ENCODE measurements at regions of chr12 and their contacts with region 1.

Region 1: DNA sequence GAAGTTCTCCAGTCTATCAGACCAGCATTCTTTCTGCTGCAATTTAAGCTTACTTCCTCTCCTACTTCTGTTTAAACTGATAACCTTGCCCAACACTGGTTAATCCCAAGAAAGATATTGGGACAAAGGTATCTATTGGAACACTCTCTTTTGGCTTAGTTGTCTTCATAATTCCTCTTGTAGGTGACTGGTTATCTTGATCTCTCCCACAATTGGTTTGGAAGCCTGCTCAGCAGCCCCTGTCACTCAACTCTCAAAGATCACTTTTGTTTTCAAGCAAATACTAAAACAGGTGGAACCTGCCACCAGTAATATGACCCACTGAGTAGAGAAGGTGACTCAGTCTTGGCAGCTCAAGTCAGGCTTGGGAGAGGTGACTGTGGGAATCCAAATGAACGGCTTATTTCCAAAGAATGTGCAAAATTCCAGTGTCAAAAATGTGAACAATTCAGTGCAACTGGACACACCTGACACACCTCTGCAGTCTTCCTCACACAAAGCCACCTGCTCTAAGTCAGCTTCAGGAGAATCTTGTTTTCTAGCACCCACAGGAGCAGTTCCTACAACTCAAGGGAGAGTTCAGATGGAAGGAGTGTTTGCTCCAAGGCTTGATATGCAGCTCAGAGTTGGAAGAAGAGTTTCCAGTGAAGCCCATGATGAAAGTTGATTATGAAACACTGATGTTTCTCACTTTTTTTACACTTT is 83.2 kb upstream of the SLC38A2 start:
- DNase-seq: peak; percentile 84 to 87
- H3K4me3 ChIP-seq: no peak overlapping the region
- H3K4me3 Mint-ChIP-seq: peak overlapping the region; percentile 32
- H3K27ac Mint-ChIP-seq: peak overlapping the region; percentile 65
- H3K4me1 ChIP-seq: peaks cover 58% of the 10 kb centered on the region
- H3K4me1 Mint-ChIP-seq: peaks cover 46% of the 10 kb centered on the region
- H3K27me3 ChIP-seq: no peaks in the 10 kb centered on the region
- H3K27me3 Mint-ChIP-seq: no peaks in the 10 kb centered on the region
- CTCF ChIP-seq: no peak

Region 2: DNA sequence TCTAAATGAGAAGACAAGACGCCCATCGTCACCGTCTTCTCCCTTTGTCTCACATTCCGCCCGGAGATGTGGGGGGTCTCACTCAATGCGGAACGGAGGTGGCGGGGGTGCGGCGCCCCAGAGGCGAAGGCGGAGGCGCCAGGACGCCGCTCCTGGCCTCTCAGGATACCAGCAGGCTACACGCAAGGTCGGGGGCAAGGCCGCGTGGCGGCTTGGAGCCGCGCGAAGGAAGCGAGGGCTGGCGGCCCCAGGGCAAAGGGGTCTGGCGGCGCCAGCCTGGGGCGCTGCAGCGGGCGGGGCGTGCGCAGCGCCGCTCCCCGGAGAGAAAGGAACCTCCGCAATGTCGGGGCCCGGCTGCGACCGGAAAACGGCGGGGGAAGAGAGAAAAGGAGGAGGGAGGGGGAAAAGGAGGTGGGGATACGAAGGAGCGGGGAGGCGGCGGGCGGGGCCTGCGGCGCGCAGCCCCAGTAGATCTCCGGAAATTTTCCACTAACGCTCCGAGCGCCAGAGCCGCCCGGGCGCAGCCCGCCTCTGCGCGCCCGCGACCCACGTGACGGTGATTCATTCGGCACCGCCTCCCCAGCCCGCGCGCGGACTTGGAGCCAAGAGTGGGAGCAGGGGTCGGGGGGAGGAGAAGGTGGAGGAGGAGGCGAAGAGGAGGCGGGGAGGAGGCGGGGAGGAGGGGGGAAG is 72.7 kb before region 1 on chr12:
- CTCF ChIA-PET with region 1: no interaction called
- POLR2A ChIA-PET with region 1: no interaction called
- intact Hi-C with region 1: loop called (anchors 2 kb)
- DNase-seq: peak; percentile 97 to 98
- H3K4me3 ChIP-seq: peak overlapping the region; percentile 94
- H3K4me3 Mint-ChIP-seq: peak overlapping the region; percentile 77
- H3K27ac Mint-ChIP-seq: peak overlapping the region; percentile 99
- H3K4me1 ChIP-seq: peaks cover 47% of the 10 kb centered on the region
- H3K4me1 Mint-ChIP-seq: peaks cover 38% of the 10 kb centered on the region
- H3K27me3 ChIP-seq: no peaks in the 10 kb centered on the region
- H3K27me3 Mint-ChIP-seq: no peaks in the 10 kb centered on the region
- CTCF ChIP-seq: peak in 1 of 2 experiments; percentile 17

Region 3: GRCh38 chr12:46430340-46430948 is 25.4 kb before region 1 on chr12:
- CTCF ChIA-PET with region 1: no interaction called
- POLR2A ChIA-PET with region 1: no interaction called
- intact Hi-C with region 1: loop called (anchors 1 kb)
- DNase-seq: peak; percentile 45 to 69
- H3K4me3 ChIP-seq: no peak overlapping the region
- H3K4me3 Mint-ChIP-seq: no peak overlapping the region
- H3K27ac Mint-ChIP-seq: peak overlapping the region; percentile 92
- H3K4me1 ChIP-seq: peaks cover 20% of the 10 kb centered on the region
- H3K4me1 Mint-ChIP-seq: peaks cover 30% of the 10 kb centered on the region
- H3K27me3 ChIP-seq: no peaks in the 10 kb centered on the region
- H3K27me3 Mint-ChIP-seq: no peaks in the 10 kb centered on the region
- CTCF ChIP-seq: no peak

Region 4: DNA sequence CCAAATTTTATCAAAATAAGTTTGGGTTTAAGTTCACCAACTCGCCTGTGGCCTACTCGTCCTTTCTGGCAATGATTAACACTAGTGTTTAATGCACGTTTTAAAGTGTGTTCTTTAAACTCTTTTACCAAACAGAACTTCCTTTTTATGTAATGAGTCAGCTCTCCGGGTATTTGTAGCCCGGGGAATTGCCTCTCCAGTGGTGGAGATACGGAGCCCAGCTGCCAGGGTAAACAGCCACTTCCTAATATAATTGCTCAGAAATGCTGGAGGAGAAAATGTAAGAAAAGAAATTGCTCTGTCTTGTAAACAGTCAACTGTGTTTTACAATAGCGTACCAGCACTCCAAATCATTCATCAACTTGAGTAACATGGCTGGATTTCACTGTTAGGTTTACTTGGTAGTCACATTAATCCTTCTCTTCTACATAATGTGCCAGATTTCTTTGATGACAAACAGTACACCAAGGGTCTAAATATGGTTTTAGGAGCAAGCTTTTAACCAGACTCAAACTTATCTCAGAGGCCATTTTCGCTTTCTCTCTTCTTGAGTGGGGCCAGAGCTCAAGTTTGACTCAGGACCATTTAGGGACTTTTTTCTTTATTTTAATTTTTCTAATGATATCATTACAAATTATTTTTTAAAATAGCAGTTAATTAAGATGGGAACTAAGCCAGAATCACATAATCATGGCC is 18.0 kb after region 1 on chr12:
- CTCF ChIA-PET with region 1: no interaction called
- POLR2A ChIA-PET with region 1: interaction called, 5 read pairs
- intact Hi-C with region 1: loop called (anchors 1 kb)
- DNase-seq: peak; percentile 77 to 84
- H3K4me3 ChIP-seq: no peak overlapping the region
- H3K4me3 Mint-ChIP-seq: peak overlapping the region; percentile 62
- H3K27ac Mint-ChIP-seq: peak overlapping the region; percentile 84
- H3K4me1 ChIP-seq: peaks cover 48% of the 10 kb centered on the region
- H3K4me1 Mint-ChIP-seq: peaks cover 26% of the 10 kb centered on the region
- H3K27me3 ChIP-seq: no peaks in the 10 kb centered on the region
- H3K27me3 Mint-ChIP-seq: no peaks in the 10 kb centered on the region
- CTCF ChIP-seq: no peak

Region 5: GRCh38 chr12:46499901-46500300 is 44.1 kb after region 1 on chr12:
- CTCF ChIA-PET with region 1: no interaction called
- POLR2A ChIA-PET with region 1: no interaction called
- intact Hi-C with region 1: no loop called
- DNase-seq: no peak
- H3K4me3 ChIP-seq: no peak overlapping the region
- H3K4me3 Mint-ChIP-seq: no peak overlapping the region
- H3K27ac Mint-ChIP-seq: no peak overlapping the region
- H3K4me1 ChIP-seq: peaks cover 10% of the 10 kb centered on the region; the same call in 1 of the 2 replicates
- H3K4me1 Mint-ChIP-seq: no peaks in the 10 kb centered on the region
- H3K27me3 ChIP-seq: no peaks in the 10 kb centered on the region
- H3K27me3 Mint-ChIP-seq: no peaks in the 10 kb centered on the region
- CTCF ChIP-seq: no peak

Region 6: GRCh38 chr12:46915082-46915481 is 459.3 kb after region 1 on chr12:
- CTCF ChIA-PET with region 1: no interaction called
- POLR2A ChIA-PET with region 1: no interaction called
- intact Hi-C with region 1: no loop called
- DNase-seq: no peak
- H3K4me3 ChIP-seq: no peak overlapping the region
- H3K4me3 Mint-ChIP-seq: no peak overlapping the region
- H3K27ac Mint-ChIP-seq: no peak overlapping the region
- H3K4me1 ChIP-seq: 0 out of 2 replicates have a peak, but pooled peaks cover 5% of the 10 kb centered on the region
- H3K4me1 Mint-ChIP-seq: no peaks in the 10 kb centered on the region
- H3K27me3 ChIP-seq: no peaks in the 10 kb centered on the region
- H3K27me3 Mint-ChIP-seq: no peaks in the 10 kb centered on the region
- CTCF ChIP-seq: no peak